Left lung (tissue), 14 donors: ENCODE measurements at regions of chr11 and their contacts with region 1.

Region 1: DNA sequence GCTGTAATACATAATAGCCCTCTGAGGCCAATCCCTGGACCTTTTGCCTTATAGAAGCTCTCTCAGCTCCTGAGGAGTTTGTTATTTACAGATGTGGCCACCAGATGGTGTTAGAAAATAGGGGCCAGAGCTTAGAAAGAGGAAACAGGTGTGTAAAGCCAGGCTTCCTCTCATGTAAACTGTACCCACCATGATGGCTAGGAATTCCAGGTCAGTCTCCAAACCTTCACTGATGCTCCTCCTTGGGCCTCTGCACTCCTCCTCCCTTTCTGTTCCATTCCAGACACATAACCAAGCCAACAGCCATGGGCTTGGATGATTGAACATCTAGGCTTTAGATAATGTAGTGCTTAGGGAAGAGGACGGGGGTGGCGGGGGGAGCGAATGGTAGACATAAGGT is 39.7 kb downstream of the USP35 start:
- DNase-seq: peak in 1 of 4 donors; percentile 62
- ATAC-seq: peak; percentile 88
- H3K4me3 ChIP-seq: no peak overlapping the region
- H3K27ac ChIP-seq: no peak overlapping the region
- H3K4me1 ChIP-seq: peaks cover 0 to 26% of the 10 kb centered on the region in 2 donors
- H3K27me3 ChIP-seq: no peaks in the 10 kb centered on the region
- CTCF ChIP-seq: peak; percentile 39 to 51

Region 2: DNA sequence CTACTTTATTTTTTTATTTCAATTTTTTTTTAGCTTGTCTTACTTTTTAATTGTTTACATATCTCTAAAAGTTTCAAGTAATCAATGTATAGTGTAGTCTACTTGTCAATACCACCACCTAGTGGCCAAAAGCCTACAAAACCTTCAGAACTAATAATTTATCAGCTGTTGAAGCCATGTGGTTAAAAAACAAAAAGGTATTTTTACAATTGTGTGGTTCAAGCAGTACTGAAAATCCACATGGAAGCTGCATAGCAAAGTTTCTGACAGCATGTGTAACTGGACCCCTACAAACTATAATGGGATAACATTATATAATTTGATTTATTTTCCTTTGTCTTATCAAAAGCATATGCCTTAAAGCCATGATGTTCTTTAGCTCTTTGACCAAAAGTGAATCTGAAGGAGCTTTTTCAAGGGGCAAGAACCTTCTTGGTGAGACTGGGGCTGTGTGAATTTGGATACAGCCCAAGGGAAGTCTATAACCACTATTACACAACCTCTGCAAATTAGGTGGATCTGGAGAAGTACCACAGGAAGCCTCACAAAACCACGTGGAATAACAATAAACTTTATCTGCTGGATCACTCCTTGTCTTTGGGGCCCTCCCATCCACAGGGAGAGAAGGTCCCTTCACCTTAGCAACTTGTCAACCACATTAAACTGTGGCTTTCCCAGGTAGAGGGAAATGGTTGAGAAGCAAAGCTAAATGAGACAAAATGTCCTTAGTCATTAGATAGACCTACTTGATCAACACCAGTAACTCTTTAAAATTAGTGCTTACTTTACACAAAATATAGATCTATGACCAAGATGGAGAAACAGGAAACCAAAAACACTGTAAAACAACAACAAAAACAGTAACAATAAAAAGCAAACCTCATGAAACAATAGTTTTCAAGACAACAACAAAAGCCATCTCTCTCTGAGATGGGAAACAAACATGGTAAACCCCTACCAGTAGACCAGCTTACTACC is 336.3 kb after region 1 on chr11:
- intact Hi-C with region 1: loop called in 1 of 2 experiments (anchors 10 kb)
- DNase-seq: peak in 2 of 4 donors; percentile 59 to 72
- ATAC-seq: peak; percentile 70
- H3K4me3 ChIP-seq: no peak overlapping the region
- H3K27ac ChIP-seq: no peak overlapping the region
- H3K4me1 ChIP-seq: peaks cover 21 to 40% of the 10 kb centered on the region in 2 donors
- H3K27me3 ChIP-seq: no peaks in the 10 kb centered on the region
- CTCF ChIP-seq: peak; percentile 60 to 71